ENCODE measurements at regions of chr17 and their contacts with region 1.

Region 1: DNA sequence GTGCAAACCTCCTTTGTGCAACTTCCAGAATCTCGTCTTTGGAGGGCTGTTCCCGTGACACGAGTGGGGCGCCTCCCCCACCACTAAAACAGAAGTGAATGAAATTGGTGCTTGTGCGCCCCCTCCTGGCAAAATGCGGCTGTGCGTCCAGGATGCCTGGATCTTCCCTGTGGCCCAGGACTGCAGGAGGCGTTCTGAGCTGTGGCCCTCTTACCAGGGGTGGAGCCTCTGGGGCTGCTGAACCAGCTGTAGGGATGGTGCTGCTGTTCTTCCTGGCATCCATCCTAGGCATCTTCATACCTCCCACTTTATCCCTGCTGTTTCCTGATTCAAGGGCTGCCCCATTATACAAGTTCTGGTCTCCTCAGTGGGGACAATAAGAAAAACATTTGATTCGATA is 18.5 kb upstream of the NAGLU start:
- H3K4me3 Mint-ChIP-seq: no peak overlapping the region
- H3K27ac Mint-ChIP-seq: peak overlapping the region; percentile 88
- H3K4me1 Mint-ChIP-seq: peaks cover 62% of the 10 kb centered on the region
- H3K27me3 Mint-ChIP-seq: no peaks in the 10 kb centered on the region

Region 2: GRCh38 chr17:42322382-42323267 is 194.9 kb before region 1 on chr17:
- intact Hi-C with region 1: loop called (anchors 5 kb)
- H3K4me3 Mint-ChIP-seq: no peak overlapping the region
- H3K27ac Mint-ChIP-seq: no peak overlapping the region
- H3K4me1 Mint-ChIP-seq: peaks cover 26% of the 10 kb centered on the region
- H3K27me3 Mint-ChIP-seq: no peaks in the 10 kb centered on the region